Right lobe of liver (tissue), 6 donors: ENCODE measurements at regions of chr7 and their contacts with region 1.

Region 1: DNA sequence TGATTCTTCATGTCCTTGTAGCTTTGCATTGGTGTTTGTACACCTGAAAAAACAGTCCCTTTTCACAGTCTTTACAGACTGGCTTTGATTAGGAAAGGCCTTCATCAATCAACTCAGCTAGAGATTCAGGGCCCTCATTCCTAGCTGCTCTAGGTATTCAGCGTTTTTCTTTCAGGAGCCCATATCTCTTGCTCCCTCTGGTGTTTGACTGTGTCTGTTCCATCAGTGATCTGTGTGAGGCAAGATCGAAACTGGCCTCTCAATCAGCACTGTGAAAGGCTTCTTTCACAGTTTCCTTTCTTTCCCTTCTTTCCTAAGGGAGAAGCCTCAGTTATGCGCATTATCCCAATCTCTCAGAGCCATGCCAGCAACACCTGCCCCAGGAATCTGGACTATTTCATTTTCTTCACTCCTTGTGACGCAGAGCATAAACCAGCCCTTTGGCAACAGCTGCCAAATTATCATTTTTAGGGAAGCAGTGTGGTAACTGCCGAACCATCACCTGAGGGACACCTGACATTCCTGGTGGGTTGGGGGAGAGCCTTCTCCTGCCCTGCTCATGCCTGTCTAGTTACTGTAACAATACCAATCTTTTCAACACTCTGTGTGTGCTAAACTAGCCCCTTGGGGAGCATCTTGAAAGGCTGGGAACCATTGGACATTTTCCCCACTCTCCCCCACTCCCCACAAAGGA is 75.7 kb upstream of the CCDC71L start:
- DNase-seq: peak in 1 of 3 donors; percentile 57
- ATAC-seq: peak; percentile 99 to 100 (median 100)
- H3K4me3 ChIP-seq: peak overlapping the region in 1 of 3 donors; percentile 2
- H3K27ac ChIP-seq: peak overlapping the region; percentile 21 to 75 (median 39)
- H3K4me1 ChIP-seq: no peaks in the 10 kb centered on the region
- H3K27me3 ChIP-seq: no peaks in the 10 kb centered on the region
- CTCF ChIP-seq: peak; percentile 76 to 90 (median 80)
- POLR2A ChIP-seq: no peak

Region 2: GRCh38 chr7:106659963-106660861 is 76.4 kb before region 1 on chr7:
- intact Hi-C with region 1: loop called in 1 of 2 experiments (anchors 10 kb)
- DNase-seq: peak; percentile 84 to 90 (median 85)
- ATAC-seq: peak; percentile 73 to 83 (median 80)
- H3K4me3 ChIP-seq: peak overlapping the region; percentile 61 to 85 (median 75)
- H3K27ac ChIP-seq: peak overlapping the region; percentile 91 to 97 (median 95)
- H3K4me1 ChIP-seq: peaks cover 0 to 28% (median 5%) of the 10 kb centered on the region in 4 donors
- H3K27me3 ChIP-seq: no peaks in the 10 kb centered on the region
- CTCF ChIP-seq: peak; percentile 66 to 70 (median 66)
- POLR2A ChIP-seq: peak; percentile 51

Region 3: GRCh38 chr7:106806556-106806955 is 69.9 kb after region 1 on chr7:
- intact Hi-C with region 1: no loop called
- DNase-seq: no peak
- ATAC-seq: no peak
- H3K4me3 ChIP-seq: no peak overlapping the region
- H3K27ac ChIP-seq: no peak overlapping the region
- H3K4me1 ChIP-seq: no peaks in the 10 kb centered on the region
- H3K27me3 ChIP-seq: no peaks in the 10 kb centered on the region
- CTCF ChIP-seq: no peak
- POLR2A ChIP-seq: no peak

Region 4: DNA sequence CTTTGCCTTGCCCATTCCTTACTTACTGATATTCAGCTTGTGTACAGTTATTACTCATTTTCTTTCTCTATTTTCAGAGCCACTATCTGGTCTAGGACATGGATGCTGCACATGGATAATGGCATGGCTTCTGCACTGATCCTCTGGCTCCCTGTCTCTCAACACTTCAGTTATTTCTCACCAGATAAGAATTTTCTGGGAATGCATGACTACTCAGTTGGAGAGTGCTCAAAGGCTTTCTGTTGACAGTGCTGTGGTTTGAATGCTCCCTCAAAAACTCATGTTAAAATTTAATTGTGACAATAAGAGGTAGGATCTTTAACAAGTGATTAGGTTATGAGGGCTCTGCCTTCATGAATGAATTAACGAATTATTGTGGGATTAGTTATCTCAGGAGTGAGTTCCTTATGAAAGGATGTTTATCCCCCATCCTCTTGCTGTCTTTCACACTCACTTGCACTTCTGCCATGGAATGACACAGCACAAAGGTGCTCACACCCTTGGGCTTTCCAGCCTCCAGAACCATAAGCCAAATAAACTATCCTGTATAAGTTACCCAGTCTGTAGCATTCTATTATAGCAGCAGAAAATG is 112.3 kb after region 1 on chr7:
- intact Hi-C with region 1: no loop called
- DNase-seq: no peak
- ATAC-seq: no peak
- H3K4me3 ChIP-seq: no peak overlapping the region
- H3K27ac ChIP-seq: no peak overlapping the region
- H3K4me1 ChIP-seq: no peaks in the 10 kb centered on the region
- H3K27me3 ChIP-seq: no peaks in the 10 kb centered on the region
- CTCF ChIP-seq: no peak
- POLR2A ChIP-seq: no peak